ENCODE measurements at regions of chr9 and their contacts with region 1.

Region 1: GRCh38 chr9:127568971-127569885 is 42.8 kb upstream of the STXBP1 start:
- DNase-seq: peak; percentile 86 to 94
- ATAC-seq: peak; percentile 90
- H3K4me3 ChIP-seq: peak overlapping the region; percentile 50 to 86
- H3K27ac ChIP-seq: peak overlapping the region in 1 of 2 donors; percentile 85
- H3K4me1 ChIP-seq: no peaks in the 10 kb centered on the region
- H3K27me3 ChIP-seq: no peaks in the 10 kb centered on the region

Region 2: GRCh38 chr9:127525401-127526187 is 43.6 kb before region 1 on chr9:
- intact Hi-C with region 1: loop called in 1 of 2 experiments (anchors 5 kb)
- DNase-seq: no peak
- ATAC-seq: no peak
- H3K4me3 ChIP-seq: no peak overlapping the region
- H3K27ac ChIP-seq: peak overlapping the region in 1 of 2 donors; percentile 60
- H3K4me1 ChIP-seq: no peaks in the 10 kb centered on the region
- H3K27me3 ChIP-seq: no peaks in the 10 kb centered on the region

Measured in aorta (tissue), 5 donors.